Activated CD4-positive, alpha-beta T cell treated with anti-CD3 and anti-CD28 coated beads, Interleukin-2, amount 10 ng/mL, durations not matched to agents 24 days and 14 days (primary cell): ENCODE measurements at regions of chrX and their contacts with region 1.

Region 1: GRCh38 chrX:46573331-46573891 is at the start of gene CHST7:
- DNase-seq: peak; percentile 86
- H3K4me3 Mint-ChIP-seq: peak within 1 kb of the TSS; percentile 89
- H3K27ac Mint-ChIP-seq: peak within 1 kb of the TSS; percentile 88
- H3K4me1 Mint-ChIP-seq: peaks cover 35% of the 10 kb centered on the region
- H3K27me3 Mint-ChIP-seq: no peaks in the 10 kb centered on the region
- total RNA-seq, gene CHST7: 6.5 and 6.9 TPM in 2 replicates

Region 2: DNA sequence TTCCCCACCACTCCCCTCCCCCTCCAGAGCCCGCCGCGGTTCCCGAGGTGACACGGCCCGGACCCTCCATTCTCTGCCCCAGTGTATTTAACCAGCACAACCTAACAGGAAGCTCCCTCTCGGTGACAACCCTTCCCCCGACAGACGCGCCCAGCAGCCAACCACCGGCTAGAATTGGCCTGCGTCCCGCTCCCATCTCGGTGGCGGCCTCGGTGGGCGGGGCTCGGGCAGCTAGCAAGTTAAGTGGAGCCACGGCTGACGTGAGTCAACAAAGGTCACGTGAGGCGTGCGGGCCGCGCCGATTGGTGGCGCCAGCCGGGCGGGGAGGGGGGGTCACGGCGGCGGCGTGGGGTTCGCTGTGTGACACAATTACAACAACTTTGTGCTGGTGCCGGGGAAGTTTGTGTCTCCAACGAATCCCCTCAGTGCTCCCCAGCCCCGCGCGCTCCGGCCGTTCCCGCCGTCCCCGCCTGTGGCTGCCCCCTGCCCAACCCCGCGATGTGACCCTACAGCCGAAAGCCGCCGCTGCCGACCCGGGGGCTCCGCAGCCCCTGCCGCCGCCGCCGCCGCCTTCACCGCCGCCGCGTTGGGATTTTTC is 1700.5 kb before region 1 on chrX and contains the start of gene KDM6A:
- intact Hi-C with region 1: no loop called
- DNase-seq: peak; percentile 98
- H3K4me3 Mint-ChIP-seq: peak within 1 kb of the TSS; percentile 95
- H3K27ac Mint-ChIP-seq: peak within 1 kb of the TSS; percentile 99
- H3K4me1 Mint-ChIP-seq: peaks cover 6% of the 10 kb centered on the region
- H3K27me3 Mint-ChIP-seq: no peaks in the 10 kb centered on the region
- total RNA-seq, gene KDM6A: 24.2 and 26.2 TPM in 2 replicates

Region 3: DNA sequence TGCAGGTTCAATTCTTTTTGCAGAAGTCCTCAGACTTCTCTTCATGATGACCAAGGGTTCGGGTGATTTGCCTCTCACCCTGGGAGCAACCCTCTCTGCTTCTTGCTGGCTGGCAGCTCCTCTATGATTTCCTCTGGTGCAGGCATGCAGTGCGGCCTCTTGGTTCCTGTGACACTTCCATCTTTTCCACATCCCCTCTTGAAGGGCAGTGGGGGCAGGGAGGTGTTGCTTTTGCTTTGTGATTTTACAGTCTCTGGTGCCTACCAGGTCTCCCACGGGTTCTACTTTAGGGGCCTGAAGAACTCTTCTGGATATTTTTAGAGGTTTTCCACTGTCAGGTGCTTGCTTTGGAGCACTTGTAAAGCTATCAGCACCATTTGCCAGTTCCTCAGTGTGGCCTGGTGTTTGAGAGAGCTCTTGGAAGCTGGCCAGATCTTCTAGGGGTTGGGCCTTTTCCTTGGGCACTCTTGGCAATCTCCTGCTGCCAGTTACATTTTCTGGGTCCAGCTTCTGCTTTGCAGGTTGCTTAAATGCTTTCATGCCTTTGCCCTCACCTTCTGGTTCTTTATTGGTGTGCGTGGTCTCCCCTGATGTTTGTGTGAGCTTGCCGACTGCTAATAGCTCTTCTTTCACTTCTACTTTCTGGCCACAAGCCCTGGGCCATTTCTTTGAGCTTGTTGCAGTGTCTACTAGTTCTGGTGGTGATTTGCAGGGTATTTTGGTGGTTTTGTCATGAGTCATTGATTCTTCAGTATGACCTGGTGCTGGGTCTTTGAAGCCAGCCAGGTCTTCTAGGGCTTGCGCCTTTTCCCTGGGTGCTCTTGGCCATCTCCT is 11.4 kb before region 1 on chrX:
- intact Hi-C with region 1: loop called (anchors 1 kb)
- DNase-seq: peak; percentile 59
- H3K4me3 Mint-ChIP-seq: no peak overlapping the region
- H3K27ac Mint-ChIP-seq: no peak overlapping the region
- H3K4me1 Mint-ChIP-seq: peaks cover 10% of the 10 kb centered on the region
- H3K27me3 Mint-ChIP-seq: no peaks in the 10 kb centered on the region

Region 4: GRCh38 chrX:46611658-46612362 is 38.4 kb after region 1 on chrX:
- intact Hi-C with region 1: loop called (anchors 2 kb)
- DNase-seq: peak; percentile 85
- H3K4me3 Mint-ChIP-seq: peak overlapping the region; percentile 64
- H3K27ac Mint-ChIP-seq: peak overlapping the region; percentile 73
- H3K4me1 Mint-ChIP-seq: peaks cover 39% of the 10 kb centered on the region
- H3K27me3 Mint-ChIP-seq: no peaks in the 10 kb centered on the region

Region 5: GRCh38 chrX:46713672-46714490 is 140.5 kb after region 1 on chrX:
- intact Hi-C with region 1: loop called (anchors 5 kb)
- DNase-seq: no peak
- H3K4me3 Mint-ChIP-seq: peak overlapping the region; percentile 33
- H3K27ac Mint-ChIP-seq: peak overlapping the region; percentile 78
- H3K4me1 Mint-ChIP-seq: peaks cover 57% of the 10 kb centered on the region
- H3K27me3 Mint-ChIP-seq: no peaks in the 10 kb centered on the region

Region 6: DNA sequence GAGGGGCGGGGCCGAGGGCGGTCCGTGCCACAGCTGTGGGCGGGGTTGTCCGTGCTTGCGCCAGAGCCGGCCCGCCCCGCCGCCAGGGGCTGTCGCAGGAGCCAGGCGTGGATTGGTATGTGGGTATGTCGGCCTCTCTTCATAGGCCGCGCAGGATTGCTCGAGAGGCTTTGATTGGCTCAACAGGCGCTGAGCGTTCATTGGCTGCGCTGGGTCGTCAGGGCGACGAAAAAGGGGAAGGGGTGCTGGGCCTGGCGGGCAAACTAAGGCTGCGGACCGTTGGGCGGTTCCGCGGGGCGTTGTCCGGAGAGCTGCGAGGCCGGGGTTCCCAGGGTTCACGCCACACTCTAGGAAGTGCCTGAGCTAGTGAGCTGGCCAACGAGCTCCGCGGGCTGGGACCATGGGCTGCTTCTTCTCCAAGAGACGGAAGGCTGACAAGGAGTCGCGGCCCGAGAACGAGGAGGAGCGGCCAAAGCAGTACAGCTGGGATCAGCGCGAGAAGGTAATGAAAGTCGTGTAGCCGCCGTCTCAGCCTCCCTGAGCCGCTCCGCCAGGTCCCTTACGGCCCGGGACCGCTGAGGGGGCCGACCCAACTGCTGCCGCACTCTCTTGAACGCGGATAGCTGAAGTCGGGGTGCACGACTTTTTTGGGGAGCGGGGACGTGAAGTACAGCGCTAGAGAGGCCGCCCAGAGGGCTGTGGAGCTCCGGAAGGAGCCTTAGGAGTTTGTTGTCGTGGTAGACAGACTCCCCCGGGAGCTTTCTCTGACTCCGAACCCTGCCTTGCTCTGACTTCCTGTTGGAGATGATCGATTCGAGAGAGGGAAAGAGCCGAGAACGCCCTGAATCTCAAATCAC is 263.5 kb after region 1 on chrX and contains the start of gene RP2:
- intact Hi-C with region 1: loop called (anchors 5 kb)
- DNase-seq: peak; percentile 95
- H3K4me3 Mint-ChIP-seq: peak within 1 kb of the TSS; percentile 98
- H3K27ac Mint-ChIP-seq: peak within 1 kb of the TSS; percentile 95
- H3K4me1 Mint-ChIP-seq: peaks cover 6% of the 10 kb centered on the region
- H3K27me3 Mint-ChIP-seq: peaks cover 6% of the 10 kb centered on the region
- total RNA-seq, gene RP2: 6.3 and 7.6 TPM in 2 replicates